ENCODE measurements at regions of chr19 and their contacts with region 1.

Region 1: DNA sequence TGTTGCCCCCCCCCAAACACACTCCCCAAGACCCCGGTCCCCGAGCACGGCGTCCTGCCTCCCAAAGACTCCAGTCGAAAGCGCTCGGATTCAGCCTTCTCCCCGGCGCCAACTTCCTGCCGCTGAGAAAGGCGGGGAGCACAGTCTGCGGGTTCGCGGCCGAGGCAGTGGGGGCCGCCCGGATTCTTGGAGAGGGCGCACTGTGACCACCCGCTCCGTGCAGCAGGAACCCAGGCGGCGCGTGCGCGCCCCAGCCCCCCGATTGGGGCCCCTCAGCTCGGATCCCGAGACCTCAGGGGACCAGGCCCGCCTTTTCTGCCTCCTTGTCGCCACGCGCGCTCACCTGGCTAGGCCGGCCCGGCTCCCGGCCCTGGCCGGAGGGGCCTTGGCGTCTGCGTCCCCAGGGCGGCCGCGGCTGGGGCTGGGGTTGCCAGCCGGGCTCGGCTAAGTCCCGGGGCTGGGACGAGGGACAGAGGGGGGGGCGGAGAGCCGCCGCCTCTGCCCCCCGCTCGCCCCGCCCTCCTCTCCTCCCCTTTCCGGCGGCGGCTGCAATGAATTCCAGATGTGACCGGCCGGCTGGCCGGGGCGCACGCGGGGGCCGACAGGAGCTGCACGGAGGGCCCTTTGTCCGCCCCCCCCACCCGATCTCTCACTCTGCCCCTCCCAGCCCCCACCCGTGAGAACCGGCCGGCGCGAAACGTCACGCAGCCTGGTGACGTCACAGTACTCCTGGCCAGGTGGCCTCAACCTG is at the start of gene S1PR2:
- DNase-seq: peak; percentile 86
- ATAC-seq: peak; percentile 72
- H3K4me3 Mint-ChIP-seq: peak within 1 kb of the TSS; percentile 72
- H3K27ac Mint-ChIP-seq: peak within 1 kb of the TSS; percentile 92
- H3K4me1 Mint-ChIP-seq: peaks cover 11% of the 10 kb centered on the region
- H3K27me3 Mint-ChIP-seq: no peaks in the 10 kb centered on the region; the same call in 1 of the 2 replicates
- CTCF ChIP-seq: no peak
- total RNA-seq, gene S1PR2: 12.9 to 13.6 TPM (median 13.2 TPM) in 3 replicates

Region 2: DNA sequence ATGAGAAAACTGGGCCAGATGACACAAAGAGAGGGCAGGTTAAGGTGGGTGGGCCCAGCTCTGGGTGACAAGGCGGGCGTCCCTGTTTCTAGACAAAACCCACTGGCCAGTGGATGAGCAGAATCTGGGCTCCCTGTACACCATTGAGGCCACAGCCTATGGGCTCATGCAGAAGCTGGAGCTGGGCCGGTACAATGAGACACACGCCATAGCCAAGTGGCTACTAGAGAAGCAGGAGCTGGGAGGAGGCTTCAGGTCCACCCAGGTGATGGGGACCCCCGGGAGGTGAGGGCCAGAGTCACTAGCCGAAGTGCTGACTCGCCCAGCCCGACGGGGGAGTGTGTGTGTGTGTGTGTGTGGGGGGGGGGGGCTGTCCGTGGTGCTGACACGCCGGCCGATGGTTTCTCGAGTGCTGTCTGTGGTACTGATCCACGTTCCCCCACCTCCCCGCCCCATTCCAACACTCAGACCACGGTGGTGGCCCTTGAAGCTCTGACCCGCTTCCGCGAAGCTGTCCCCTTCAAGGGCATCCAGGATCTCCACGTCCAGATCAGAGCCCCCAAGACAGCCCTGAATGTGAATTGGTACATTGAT is 169.2 kb before region 1 on chr19:
- CTCF ChIA-PET with region 1: no interaction called
- POLR2A ChIA-PET with region 1: no interaction called
- DNase-seq: peak; percentile 52
- ATAC-seq: peak; percentile 50
- H3K4me3 Mint-ChIP-seq: no peak overlapping the region
- H3K27ac Mint-ChIP-seq: no peak overlapping the region
- H3K4me1 Mint-ChIP-seq: no peaks in the 10 kb centered on the region
- H3K27me3 Mint-ChIP-seq: peaks cover 15% of the 10 kb centered on the region; the same call in 1 of the 2 replicates
- CTCF ChIP-seq: no peak

Region 3: GRCh38 chr19:10155839-10156238 is 75.2 kb before region 1 on chr19:
- CTCF ChIA-PET with region 1: no interaction called
- POLR2A ChIA-PET with region 1: no interaction called
- DNase-seq: no peak
- ATAC-seq: no peak
- H3K4me3 Mint-ChIP-seq: no peak overlapping the region
- H3K27ac Mint-ChIP-seq: no peak overlapping the region
- H3K4me1 Mint-ChIP-seq: no peaks in the 10 kb centered on the region
- H3K27me3 Mint-ChIP-seq: no peaks in the 10 kb centered on the region
- CTCF ChIP-seq: no peak

Region 4: DNA sequence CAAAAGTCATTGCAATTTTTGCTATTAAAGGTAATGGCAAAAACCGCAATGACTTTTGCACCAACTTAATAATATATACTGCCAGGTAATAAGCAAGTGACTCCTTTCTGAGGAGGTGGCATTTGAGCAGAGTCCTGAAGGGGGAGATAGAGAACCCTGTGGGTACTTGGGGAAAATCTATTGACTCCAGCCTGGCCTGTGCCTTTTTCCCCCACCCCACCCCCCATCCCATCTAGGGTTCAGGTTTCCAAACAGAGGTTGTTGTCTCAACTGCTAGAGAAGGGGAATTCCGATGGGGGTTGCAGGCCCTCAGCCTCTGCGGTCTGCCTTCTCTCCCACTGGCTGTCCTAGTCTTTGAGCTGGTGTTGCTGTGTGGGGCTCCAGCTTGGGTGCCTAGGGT is 11.4 kb before region 1 on chr19:
- CTCF ChIA-PET with region 1: interaction called, 20 read pairs
- POLR2A ChIA-PET with region 1: interaction called, 5 read pairs
- DNase-seq: peak; percentile 57
- ATAC-seq: peak; percentile 89
- H3K4me3 Mint-ChIP-seq: no peak overlapping the region
- H3K27ac Mint-ChIP-seq: no peak overlapping the region
- H3K4me1 Mint-ChIP-seq: no peaks in the 10 kb centered on the region
- H3K27me3 Mint-ChIP-seq: no peaks in the 10 kb centered on the region
- CTCF ChIP-seq: 0 out of 2 replicates have a peak, but pooled peaks have one; percentile 22

Region 5: DNA sequence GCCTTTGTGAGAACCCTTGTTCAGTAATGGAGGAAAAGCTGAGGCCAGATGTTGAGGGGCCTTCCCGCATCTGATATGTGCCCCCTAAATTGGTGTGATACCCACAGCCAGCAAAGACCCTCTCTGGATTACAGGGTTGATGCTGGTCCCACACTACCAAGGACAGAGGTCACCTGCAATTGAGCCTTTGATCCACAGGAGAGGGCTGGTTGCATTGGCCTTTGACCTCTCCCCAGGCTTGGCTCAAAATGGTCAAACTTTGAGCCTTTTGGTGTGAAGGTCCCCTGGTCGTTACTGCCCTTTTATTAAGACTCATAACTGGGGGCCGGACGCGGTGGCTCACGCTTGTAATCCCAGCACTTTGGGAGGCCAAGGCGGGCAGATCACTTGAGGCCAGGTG is 12.6 kb after region 1 on chr19:
- CTCF ChIA-PET with region 1: interaction called, 43 read pairs
- POLR2A ChIA-PET with region 1: interaction called, 4 read pairs
- DNase-seq: no peak
- ATAC-seq: no peak
- H3K4me3 Mint-ChIP-seq: no peak overlapping the region
- H3K27ac Mint-ChIP-seq: no peak overlapping the region
- H3K4me1 Mint-ChIP-seq: no peaks in the 10 kb centered on the region
- H3K27me3 Mint-ChIP-seq: no peaks in the 10 kb centered on the region
- CTCF ChIP-seq: no peak